Naive thymus-derived CD4-positive, alpha-beta T cell (primary cell): ENCODE measurements at regions of chr12 and their contacts with region 1.

Region 1: DNA sequence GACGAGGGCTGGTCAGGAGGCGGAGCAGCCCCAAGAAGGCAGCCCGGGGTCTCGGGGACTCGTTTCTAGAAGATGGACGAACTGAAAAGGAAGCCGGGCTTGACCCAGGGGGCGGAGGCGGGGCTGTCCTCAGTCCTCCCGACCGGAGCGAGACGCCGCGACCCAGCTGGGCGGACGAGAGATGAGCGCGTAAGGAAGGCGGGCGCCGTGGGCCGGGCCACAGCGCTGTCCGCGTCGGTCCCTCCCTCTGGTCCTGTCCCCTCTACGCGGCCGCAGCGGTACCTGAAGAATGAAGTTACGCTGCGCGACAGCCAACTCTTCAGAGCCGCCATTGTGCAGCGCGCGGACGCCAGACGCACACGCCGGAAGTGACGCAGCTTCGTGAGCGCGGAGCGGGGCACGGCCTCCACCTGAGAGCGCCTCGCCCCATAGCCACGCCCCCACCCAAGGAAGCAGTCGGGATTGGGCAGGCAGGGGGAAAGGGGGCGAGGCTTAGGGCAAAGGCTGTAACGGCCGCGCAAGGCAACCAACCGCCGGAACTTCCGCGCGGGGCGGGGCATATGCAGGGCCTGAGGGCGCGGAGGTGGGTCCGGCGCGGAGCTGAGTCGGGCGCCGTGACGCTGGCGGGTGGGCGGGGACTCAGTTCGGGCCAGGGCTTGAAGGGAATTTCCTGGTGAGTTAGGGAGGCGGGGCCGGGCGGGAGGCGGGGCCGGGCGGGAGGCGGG is at the start of gene DIABLO:
- DNase-seq: peak; percentile 97 to 100 (median 100)
- ATAC-seq: peak; percentile 96
- H3K4me3 ChIP-seq: peak within 1 kb of the TSS; percentile 90
- H3K4me3 Mint-ChIP-seq: peak within 1 kb of the TSS; percentile 75 to 95 (median 90)
- H3K27ac ChIP-seq: peak within 1 kb of the TSS; percentile 99
- H3K27ac Mint-ChIP-seq: peak within 1 kb of the TSS; percentile 76 to 96 (median 93)
- H3K4me1 ChIP-seq: peaks cover 24 to 34% of the 10 kb centered on the region in 2 donors
- H3K4me1 Mint-ChIP-seq: peaks cover 23 to 53% (median 47%) of the 10 kb centered on the region in 7 donors
- H3K27me3 ChIP-seq: no peaks in the 10 kb centered on the region
- H3K27me3 Mint-ChIP-seq: no peaks in the 10 kb centered on the region
- total RNA-seq, gene DIABLO: 41.3 to 94.1 (median 50.1) TPM

Region 2: GRCh38 chr12:121802846-121803630 is 422.8 kb before region 1 on chr12:
- CTCF ChIA-PET with region 1: no interaction called
- POLR2A ChIA-PET with region 1: no interaction called
- intact Hi-C with region 1: loop called in 1 of 2 experiments (anchors 10 kb)
- DNase-seq: peak; percentile 84 to 94 (median 92)
- ATAC-seq: peak; percentile 65
- H3K4me3 ChIP-seq: peak overlapping the region; percentile 94
- H3K4me3 Mint-ChIP-seq: peak overlapping the region; percentile 89 to 99 (median 96)
- H3K27ac ChIP-seq: peak overlapping the region; percentile 96
- H3K27ac Mint-ChIP-seq: peak overlapping the region; percentile 98 to 100 (median 99)
- H3K4me1 ChIP-seq: peaks cover 21 to 28% of the 10 kb centered on the region in 2 donors
- H3K4me1 Mint-ChIP-seq: peaks cover 25 to 37% (median 29%) of the 10 kb centered on the region in 7 donors
- H3K27me3 ChIP-seq: no peaks in the 10 kb centered on the region
- H3K27me3 Mint-ChIP-seq: no peaks in the 10 kb centered on the region

Region 3: GRCh38 chr12:122078141-122079032 is 147.5 kb before region 1 on chr12 and contains the start of gene MLXIP:
- CTCF ChIA-PET with region 1: no interaction called
- POLR2A ChIA-PET with region 1: interaction called, 3 read pairs
- intact Hi-C with region 1: loop called (anchors 1 kb)
- DNase-seq: peak; percentile 77 to 95 (median 85)
- ATAC-seq: peak; percentile 91
- H3K4me3 ChIP-seq: peak within 1 kb of the TSS; percentile 66
- H3K4me3 Mint-ChIP-seq: peak within 1 kb of the TSS; percentile 85 to 100 (median 98)
- H3K27ac ChIP-seq: peak within 1 kb of the TSS; percentile 82
- H3K27ac Mint-ChIP-seq: peak within 1 kb of the TSS; percentile 82 to 99 (median 88)
- H3K4me1 ChIP-seq: peaks cover 22 to 32% of the 10 kb centered on the region in 2 donors
- H3K4me1 Mint-ChIP-seq: peaks cover 7 to 45% (median 28%) of the 10 kb centered on the region in 7 donors
- H3K27me3 ChIP-seq: no peaks in the 10 kb centered on the region
- H3K27me3 Mint-ChIP-seq: no peaks in the 10 kb centered on the region
- total RNA-seq, gene MLXIP: 57.0 to 123 (median 115) TPM

Region 4: DNA sequence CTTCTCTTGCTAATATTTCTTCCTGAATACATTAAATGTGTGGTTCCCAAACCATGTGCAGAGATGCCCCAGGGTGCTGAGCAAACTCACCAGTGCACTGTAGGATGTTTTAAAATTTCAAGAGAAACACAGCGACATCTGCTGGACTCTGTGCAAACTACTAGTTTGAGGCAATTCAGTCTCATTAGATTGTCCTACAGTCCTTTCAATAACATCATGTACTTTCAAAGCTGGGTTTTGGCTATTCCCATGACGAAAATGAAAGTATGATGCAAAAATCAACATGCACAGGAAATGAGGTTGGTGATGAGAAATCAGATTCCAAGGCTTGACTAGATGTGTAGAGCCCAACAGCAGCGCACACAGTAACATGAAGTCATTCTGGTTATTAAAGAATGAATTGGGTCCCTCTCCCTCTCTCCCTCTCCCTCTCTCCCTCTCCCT is 130.4 kb after region 1 on chr12:
- CTCF ChIA-PET with region 1: no interaction called
- POLR2A ChIA-PET with region 1: no interaction called
- intact Hi-C with region 1: loop called in 1 of 2 experiments (anchors 10 kb)
- DNase-seq: peak in 8 of 9 donors; percentile 31 to 58 (median 41)
- ATAC-seq: peak; percentile 86
- H3K4me3 ChIP-seq: no peak overlapping the region
- H3K4me3 Mint-ChIP-seq: no peak overlapping the region
- H3K27ac ChIP-seq: no peak overlapping the region
- H3K27ac Mint-ChIP-seq: peak overlapping the region in 5 of 9 donors; percentile 13 to 59 (median 35)
- H3K4me1 ChIP-seq: no peaks in the 10 kb centered on the region
- H3K4me1 Mint-ChIP-seq: peaks cover 0 to 7% (median 4%) of the 10 kb centered on the region in 7 donors
- H3K27me3 ChIP-seq: no peaks in the 10 kb centered on the region
- H3K27me3 Mint-ChIP-seq: no peaks in the 10 kb centered on the region

Region 5: GRCh38 chr12:122526683-122527477 is 301.0 kb after region 1 on chr12 and contains the starts of genes KNTC1 and RSRC2:
- CTCF ChIA-PET with region 1: no interaction called
- POLR2A ChIA-PET with region 1: no interaction called
- intact Hi-C with region 1: loop called (anchors 1 kb)
- DNase-seq: peak; percentile 87 to 99 (median 99)
- ATAC-seq: peak; percentile 96
- H3K4me3 ChIP-seq: peak within 1 kb of the TSS; percentile 86
- H3K4me3 Mint-ChIP-seq: no peak within 1 kb of the TSS
- H3K27ac ChIP-seq: peak within 1 kb of the TSS; percentile 94
- H3K27ac Mint-ChIP-seq: peak within 1 kb of the TSS in 1 of 9 donors; percentile 68
- H3K4me1 ChIP-seq: peaks cover 30 to 37% of the 10 kb centered on the region in 2 donors
- H3K4me1 Mint-ChIP-seq: peaks cover 24 to 41% (median 36%) of the 10 kb centered on the region in 7 donors
- H3K27me3 ChIP-seq: no peaks in the 10 kb centered on the region
- H3K27me3 Mint-ChIP-seq: no peaks in the 10 kb centered on the region
- total RNA-seq, gene KNTC1: 24.5 to 102 (median 31.0) TPM
- total RNA-seq, gene RSRC2: 89.7 to 249 (median 139) TPM